GM18951 (cell line): ENCODE measurements at regions of chr2 and their contacts with region 1.

Region 1: DNA sequence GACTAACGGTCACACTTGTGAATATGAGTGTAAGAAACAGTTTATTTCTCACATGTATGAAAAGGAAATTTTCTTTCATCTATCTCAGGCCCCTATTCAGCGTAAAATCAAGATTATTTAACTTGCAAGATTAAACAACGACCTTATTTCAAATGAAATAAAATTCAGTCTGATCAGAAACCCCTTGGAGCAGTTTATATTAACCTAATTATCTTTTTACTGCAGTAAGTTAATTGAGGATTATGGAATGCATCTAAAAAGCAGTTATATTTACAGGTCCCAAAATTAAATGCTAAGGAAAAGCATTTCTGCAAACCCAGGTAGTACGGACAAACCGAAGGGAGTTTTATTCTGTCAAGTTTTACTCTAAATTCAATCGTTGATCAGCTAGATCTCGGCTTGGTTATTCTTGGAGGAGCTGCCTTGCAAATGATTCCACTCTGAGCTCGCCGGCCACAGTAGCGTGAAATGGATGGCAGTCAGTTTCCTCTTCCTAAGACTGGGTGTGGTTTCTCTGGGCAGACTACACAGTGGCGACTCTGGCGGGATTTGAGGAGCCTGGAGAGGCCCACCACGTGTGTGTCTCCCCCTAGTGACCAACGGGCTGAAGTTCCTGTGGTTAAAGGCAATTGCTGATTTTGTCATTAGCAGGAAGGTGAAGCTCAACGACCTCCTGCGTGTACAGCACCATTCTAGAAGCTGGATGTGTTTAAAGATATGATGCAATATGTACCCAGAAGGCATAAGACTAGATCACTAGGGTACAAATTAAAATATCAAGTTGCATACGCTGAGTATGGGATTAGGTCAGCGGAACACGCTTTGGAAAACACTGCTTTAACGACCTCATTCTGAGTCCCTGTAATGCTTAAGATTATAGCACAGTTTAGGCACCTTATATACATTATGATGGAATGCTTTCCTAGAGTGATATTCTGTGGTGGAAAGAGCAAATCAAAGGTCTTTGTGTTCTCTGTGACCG is 36.4 kb downstream of the PRKRA start:
- POLR2A ChIP-seq: peak; percentile 67

Region 2: GRCh38 chr2:178057179-178057680 is 357.3 kb before region 1 on chr2:
- in situ Hi-C with region 1: no loop called
- POLR2A ChIP-seq: no peak

Region 3: DNA sequence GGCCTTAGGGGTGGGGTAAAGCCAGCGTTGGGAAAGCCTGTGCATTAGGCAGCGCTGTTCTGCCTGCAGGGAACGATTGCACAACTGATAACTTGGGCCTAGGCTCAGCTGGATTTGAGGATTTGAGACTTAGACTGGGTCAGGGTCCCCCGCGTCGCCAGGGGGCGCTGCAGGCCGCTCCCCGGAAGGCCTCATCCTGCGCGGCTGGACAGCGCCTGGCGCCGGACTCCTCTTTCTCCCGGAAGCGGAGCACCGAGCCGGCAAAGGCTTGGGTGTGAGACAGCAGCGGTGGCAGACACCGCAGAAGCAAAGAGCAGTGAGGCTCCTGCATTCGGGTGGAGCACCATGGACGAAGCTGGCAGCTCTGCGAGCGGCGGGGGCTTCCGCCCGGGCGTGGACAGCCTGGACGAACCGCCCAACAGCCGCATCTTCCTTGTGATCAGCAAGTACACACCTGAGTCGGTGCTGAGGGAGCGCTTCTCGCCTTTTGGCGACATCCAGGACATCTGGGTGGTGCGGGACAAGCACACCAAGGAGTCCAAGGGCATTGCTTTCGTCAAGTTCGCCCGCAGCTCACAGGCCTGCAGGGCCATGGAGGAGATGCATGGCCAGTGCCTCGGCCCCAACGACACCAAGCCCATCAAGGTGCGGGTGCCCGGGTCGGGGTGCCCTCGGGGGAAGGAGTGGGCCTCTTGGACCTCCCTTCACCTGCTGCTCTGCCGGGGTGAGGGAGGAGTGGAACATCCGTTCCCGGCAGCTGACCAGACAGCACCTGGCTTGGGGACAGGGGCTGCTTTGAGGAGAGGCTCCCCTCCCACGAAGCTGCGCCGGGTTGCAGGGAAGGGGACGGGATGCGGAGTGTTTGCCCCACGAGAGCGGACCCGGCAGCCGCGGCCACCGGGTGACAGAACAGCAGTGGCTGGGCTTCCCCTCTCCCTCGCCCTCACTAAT is 302.1 kb before region 1 on chr2 and contains the start of gene RBM45:
- in situ Hi-C with region 1: loop called (anchors 25 kb)
- POLR2A ChIP-seq: peak; percentile 95